H1 (cell line): ENCODE measurements at regions of chr7 and their contacts with region 1.

Region 1: DNA sequence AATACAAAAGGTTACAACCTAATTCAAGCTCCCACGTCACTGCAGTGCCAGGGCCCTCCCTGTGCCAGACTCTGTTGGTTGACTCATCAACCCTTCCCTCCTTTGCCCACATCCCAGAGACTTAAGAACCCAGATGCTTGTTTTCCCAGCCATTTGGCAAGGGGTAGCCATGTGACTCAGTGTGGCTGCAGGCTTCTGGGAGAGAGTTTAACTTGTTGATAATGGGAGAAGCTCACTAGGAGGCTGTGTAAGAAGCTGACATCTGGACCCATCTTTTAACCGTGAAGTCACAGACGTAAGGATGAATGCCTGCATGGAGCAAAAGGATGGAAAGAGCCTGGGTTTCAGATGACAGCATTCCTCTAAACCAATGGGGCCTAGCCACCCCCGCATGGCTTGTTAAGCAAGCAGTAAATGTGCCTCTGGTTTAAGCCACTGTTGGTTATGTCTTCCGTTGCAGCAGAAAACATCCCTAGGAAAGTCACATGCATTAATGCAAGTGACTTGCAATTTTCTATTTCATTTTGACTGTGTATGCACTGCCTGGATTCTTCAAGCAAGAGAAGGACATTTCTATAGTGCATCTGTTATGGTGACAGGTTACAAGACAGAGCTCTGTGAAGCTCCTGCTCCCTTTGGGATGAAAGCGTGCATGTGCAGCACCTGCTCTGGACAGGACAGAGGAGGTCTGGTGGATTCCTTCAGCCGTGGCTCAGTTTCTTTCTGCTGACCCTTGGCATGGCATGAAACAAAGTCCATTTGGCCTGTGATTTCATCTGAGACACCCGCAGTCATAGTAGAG is 57.5 kb upstream of the CREB5 start:
- DNase-seq: no peak
- H3K4me3 ChIP-seq: no peak overlapping the region
- H3K27ac ChIP-seq: no peak overlapping the region
- H3K4me1 ChIP-seq: peaks cover 4 to 12% (median 10%) of the 10 kb centered on the region in 4 experiments
- H3K27me3 ChIP-seq: 0 out of 7 replicates have a peak, but pooled peaks cover 0 to 3% (median 0%) of the 10 kb centered on the region in 4 experiments
- CTCF ChIP-seq: no peak
- EP300 ChIP-seq: no peak
- POLR2A ChIP-seq: no peak
- RAD21 ChIP-seq: no peak

Region 2: DNA sequence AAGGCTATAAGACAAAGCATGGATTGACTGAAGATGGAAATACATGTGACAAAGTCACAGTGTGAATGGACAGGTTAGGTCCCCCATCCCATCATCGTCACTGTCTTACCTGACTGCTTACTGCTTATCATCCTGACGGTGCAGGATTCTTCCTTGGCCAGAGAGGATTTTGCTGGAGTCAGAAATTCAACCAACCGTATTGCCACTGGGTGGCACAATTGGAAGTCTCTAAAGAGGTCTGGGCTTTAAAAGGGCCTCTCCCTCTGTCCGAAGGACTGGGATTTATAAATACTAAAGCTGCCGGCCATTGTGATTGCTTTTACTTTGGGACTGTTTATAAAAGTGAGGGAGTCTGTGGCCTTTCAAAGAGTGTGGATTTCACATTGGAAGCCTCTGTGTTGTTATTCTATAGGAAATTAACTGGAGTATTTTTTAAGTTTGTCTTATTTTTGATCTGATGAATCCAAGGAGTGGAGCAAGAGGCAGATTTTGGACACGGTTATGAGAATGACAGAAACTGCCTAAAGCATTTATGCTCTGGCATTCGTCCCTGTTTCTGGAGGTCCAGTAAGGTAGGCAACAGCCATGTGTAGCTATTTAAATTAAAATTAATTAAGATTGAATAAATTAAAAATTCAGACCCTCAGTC is 55.8 kb before region 1 on chr7:
- CTCF ChIA-PET with region 1: interaction called, 15 read pairs
- POLR2A ChIA-PET with region 1: no interaction called
- DNase-seq: peak; percentile 29 to 59
- H3K4me3 ChIP-seq: no peak overlapping the region
- H3K27ac ChIP-seq: no peak overlapping the region
- H3K4me1 ChIP-seq: peaks cover 0 to 2% (median 1%) of the 10 kb centered on the region in 4 experiments; a peak in 2 of 7 replicates
- H3K27me3 ChIP-seq: no peaks in the 10 kb centered on the region
- CTCF ChIP-seq: peak; percentile 16 to 82 (median 72)
- EP300 ChIP-seq: no peak
- POLR2A ChIP-seq: no peak
- RAD21 ChIP-seq: peak; percentile 82 to 90